ENCODE measurements at regions of chr2 and their contacts with region 1.

Region 1: DNA sequence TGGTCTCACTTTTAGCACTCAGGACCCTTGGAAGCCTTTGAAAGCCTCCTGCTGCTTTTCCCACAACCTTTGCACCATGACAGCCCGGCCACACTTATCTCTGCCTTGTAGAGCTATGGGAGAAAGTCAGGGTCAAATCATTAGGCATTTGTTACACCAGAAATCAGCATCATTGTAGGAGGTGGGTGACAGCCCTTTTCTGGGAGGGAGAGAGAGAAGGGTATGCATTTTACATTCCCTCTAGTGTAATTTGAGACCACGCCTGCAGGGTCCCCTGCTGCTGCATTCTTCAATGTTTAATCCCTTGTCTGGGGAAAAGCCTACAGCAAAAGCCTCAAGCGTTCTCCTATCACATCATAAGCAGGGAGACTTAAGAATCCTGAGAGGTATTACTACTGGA is 766.8 kb upstream of the FAM98A start:
- DNase-seq: no peak
- CTCF ChIP-seq: no peak

Region 2: DNA sequence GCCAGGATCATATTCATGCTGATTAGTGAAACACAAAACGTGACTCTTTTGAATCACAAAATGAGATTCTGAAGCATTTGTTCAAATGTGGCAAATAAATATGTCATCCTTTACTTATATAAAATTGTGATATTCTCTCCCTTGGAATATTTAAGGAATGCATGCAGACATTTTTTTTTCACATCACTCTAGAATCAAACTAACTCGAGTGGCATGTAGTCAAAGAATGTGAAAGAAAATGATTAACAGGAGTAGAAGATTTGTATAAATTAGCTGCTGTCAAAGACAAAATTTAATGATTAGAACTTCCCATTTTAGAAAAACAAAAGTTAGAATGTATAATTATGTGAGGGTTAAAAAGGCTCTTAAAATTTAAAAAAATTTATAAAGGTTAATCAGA is 45.9 kb before region 1 on chr2:
- CTCF ChIA-PET with region 1: no interaction called
- POLR2A ChIA-PET with region 1: no interaction called
- DNase-seq: no peak
- CTCF ChIP-seq: no peak

Region 3: DNA sequence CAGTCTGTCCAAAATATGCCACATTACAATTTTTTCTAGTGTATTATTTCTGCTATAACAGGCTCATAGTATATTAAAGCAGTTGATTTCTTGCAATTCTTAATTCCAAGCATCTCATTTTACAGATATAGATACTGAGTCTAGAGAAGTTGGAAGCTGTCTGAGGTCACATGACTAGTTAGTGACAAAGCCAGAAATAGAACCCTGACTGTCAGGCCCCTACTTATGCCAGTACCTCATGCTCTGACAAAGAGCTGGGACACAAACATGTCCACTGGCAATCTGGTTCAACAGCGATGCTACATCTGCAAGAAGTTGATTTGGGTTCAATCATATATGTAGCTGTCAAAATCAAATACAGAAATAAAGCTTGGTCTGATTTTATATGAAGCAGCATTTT is 16.4 kb before region 1 on chr2:
- CTCF ChIA-PET with region 1: interaction called, 13 read pairs
- POLR2A ChIA-PET with region 1: no interaction called
- DNase-seq: no peak
- CTCF ChIP-seq: no peak

Region 4: DNA sequence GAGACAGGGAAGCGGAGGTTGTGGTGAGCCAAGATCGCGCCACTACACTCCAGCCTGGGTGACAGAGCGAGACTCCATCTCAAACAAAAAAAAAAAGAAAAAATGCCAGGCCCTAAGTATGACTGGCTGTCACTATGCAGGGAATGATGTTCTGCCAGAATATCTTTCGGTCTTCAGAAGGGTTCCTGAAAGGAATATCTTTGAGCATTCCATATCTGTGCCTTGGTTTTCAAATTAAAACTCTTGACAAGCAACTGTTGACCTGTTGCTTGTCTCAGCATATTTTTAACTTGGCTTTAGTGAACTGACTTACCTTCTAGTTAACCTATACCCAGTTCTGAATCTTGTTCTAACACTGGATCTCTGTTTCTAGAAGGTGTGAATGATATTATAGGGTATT is 186.4 kb after region 1 on chr2:
- CTCF ChIA-PET with region 1: no interaction called
- POLR2A ChIA-PET with region 1: no interaction called
- DNase-seq: no peak
- CTCF ChIP-seq: no peak

Measured in GM10248 (cell line).